Right ventricle myocardium superior (tissue), 1 donor: ENCODE measurements at regions of chr5 and their contacts with region 1.

Region 1: DNA sequence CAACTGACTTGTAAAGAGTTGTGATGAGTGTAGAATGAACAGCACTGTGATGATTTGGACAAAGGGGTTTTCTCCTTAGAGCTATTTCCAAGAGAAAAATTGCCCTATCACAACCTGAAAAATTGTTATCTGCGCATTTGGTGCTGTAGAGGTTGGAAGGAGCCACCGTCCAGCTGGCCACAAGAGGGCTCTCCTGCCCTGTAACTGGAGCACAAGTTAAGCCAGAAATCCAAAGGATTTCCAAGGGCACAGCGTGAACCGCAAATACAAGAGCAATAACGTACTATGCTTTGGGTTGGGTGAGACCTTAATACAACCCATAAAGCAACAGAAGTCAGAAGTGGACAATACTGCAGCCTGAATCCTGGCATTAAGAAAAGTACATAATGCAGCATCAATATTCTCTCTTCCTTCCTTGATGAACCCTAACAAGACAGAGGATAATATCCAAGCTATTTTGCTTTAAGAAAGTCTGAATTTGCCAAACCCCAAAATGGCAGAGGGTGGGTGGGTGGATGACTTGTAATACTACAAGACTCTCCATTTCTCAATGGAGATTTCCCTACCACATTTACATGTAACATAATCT is 56.8 kb upstream of the SMIM32 start:
- DNase-seq: peak; percentile 61
- ATAC-seq: peak; percentile 75

Region 2: DNA sequence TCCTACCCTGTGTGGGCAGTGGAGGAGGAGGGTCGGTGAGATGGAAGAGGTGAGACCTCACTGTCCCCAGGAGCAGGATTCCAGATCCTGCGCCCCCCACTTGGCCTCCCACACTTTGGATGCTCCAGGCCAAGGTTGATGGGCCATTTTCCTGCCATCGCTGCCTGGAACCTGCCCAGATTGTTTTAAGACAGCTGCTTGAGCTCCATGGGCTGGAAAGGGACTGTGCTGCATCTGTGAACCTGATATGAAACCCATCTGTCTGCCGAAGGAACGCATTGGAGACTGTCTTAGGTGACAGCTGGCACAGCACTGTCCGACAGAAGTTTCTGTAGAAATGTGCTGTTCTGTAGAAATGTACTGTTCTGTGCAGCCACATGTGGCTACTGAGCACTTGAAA is 488.0 kb before region 1 on chr5:
- intact Hi-C with region 1: no loop called
- DNase-seq: no peak
- ATAC-seq: no peak

Region 3: GRCh38 chr5:136686192-136686872 is 436.6 kb after region 1 on chr5:
- intact Hi-C with region 1: loop called (anchors 10 kb)
- DNase-seq: no peak
- ATAC-seq: no peak

Region 4: GRCh38 chr5:136769900-136770684 is 520.3 kb after region 1 on chr5:
- intact Hi-C with region 1: loop called (anchors 5 kb)
- DNase-seq: peak; percentile 69
- ATAC-seq: peak; percentile 83